GM10248 (cell line): ENCODE measurements at regions of chr2 and their contacts with region 1.

Region 1: GRCh38 chr2:210503001-210503623 is 26.6 kb upstream of the LANCL1 start:
- DNase-seq: peak; percentile 42
- CTCF ChIP-seq: peak; percentile 92

Region 2: DNA sequence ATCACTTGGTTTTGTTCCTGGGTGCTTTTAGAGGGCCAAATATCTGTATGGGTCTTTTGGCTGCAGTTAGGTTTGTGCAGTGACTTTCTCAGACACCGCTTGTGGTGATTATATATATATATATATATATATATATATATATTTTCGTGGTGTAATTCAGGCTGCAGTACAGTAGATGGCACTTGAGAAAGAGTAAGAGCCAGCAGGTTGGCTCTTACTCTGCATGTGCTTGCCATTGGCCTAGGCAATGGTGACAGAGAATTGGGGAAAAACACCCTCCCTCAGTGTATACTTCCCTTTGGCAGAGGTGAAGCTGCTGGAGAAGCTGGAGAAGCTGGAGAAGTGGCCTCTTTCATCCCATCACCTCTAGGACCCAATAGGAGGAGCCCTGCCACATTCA is 166.0 kb before region 1 on chr2:
- CTCF ChIA-PET with region 1: no interaction called
- POLR2A ChIA-PET with region 1: no interaction called
- DNase-seq: no peak
- CTCF ChIP-seq: no peak

Region 3: GRCh38 chr2:210476194-210477128 is 26.7 kb before region 1 on chr2 and contains the start of gene LANCL1:
- CTCF ChIA-PET with region 1: interaction called, 14 read pairs
- POLR2A ChIA-PET with region 1: no interaction called
- DNase-seq: peak; percentile 93
- CTCF ChIP-seq: peak; percentile 11

Region 4: DNA sequence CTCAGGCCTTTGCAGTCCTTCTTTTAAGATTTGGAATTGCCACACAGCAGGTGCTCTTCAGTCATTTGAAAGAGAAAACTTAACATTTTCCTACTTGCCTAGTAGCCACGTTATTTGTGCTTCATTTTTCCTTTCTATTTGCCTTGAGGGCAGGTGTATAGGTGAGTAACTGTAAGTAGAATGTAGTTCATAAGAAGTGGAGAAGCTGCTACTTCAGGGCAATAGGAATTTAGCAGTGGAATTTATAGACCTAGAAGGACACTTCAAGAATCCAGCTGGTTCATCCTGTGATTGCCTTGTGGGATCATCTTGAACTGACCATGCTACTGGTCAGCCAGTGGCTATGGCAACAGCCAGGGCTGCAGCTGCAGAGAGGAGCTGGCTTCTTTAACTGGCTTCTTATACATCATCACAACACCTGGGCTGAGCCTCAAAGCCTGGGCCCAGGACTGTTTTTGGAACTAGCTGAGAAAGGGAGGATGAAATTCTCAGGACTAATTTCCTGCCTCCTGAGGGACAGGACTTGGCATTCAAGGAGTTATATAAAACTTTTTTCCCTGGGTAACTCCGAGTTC is 21.4 kb before region 1 on chr2:
- CTCF ChIA-PET with region 1: interaction called, 14 read pairs
- POLR2A ChIA-PET with region 1: no interaction called
- DNase-seq: no peak
- CTCF ChIP-seq: no peak

Region 5: DNA sequence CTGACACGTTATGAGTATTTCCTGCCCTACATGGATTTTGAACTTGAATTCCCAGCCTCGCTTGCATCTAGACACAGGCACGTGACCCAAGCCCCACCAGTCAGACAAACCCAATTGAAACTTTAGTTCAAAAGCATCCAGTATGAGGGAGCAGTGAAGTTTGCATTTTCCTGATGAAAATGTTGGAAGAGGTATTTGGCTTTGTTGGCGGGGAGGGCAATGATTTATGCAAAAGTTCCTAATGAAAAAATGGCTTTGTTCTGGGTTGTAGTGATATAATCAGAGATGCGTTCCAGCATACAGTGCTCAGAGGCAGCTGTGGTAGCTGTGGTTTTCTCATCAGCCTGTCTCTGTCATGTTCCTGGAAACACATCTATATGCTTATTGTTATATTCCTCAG is 16.5 kb after region 1 on chr2:
- CTCF ChIA-PET with region 1: interaction called, 26 read pairs
- POLR2A ChIA-PET with region 1: no interaction called
- DNase-seq: no peak
- CTCF ChIP-seq: no peak